ENCODE measurements at regions of chr7 and their contacts with region 1.

Region 1: DNA sequence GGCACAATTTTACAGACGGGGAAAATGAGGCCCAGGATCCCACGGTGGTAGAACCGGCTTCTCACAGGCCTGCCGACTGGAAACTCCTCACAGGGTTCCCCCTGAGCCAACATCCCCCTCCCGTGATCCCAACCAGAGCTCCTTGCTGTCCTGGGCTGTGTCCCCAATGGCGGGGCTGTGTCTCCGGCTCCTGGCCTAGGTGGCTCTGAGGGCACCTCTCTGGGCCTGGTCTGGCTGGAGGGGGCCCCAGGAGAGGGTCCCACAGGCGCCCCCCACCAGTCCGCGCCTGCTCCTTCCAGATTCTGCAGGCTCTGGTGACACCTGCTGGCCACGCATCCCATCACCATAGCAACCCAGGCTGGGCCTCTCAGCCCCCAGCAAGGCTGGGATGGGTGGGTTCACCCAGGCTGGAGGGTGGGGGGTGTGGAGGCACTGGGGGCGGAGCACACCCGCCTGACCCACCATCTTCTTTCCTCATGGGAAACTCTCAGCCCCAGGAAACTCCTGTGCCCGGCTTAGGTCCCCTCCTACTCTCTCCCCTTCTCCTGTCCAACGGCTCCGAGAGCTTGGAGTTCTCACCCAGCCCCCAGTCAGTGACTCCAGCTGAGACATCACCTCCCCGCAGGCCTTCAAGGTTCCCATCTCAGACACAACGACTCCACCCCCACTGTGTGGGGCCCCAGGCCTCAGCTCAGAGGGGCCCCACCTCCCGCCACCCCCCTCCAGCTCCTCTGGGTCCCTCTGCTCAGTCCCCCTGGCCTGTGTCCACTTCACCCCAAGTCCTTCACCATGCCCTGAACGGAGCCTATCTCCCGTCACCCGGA is 27.1 kb upstream of the TNRC18 start:
- DNase-seq: peak; percentile 63
- ATAC-seq: peak; percentile 83
- H3K4me3 Mint-ChIP-seq: no peak overlapping the region
- H3K27ac Mint-ChIP-seq: no peak overlapping the region
- H3K4me1 Mint-ChIP-seq: peaks cover 6% of the 10 kb centered on the region
- H3K27me3 Mint-ChIP-seq: no peaks in the 10 kb centered on the region
- CTCF ChIP-seq: peak; percentile 67

Region 2: GRCh38 chr7:5237286-5237685 is 213.5 kb before region 1 on chr7:
- CTCF ChIA-PET with region 1: interaction called, 18 read pairs
- POLR2A ChIA-PET with region 1: no interaction called
- intact Hi-C with region 1: no loop called
- DNase-seq: no peak
- ATAC-seq: no peak
- H3K4me3 Mint-ChIP-seq: no peak overlapping the region
- H3K27ac Mint-ChIP-seq: no peak overlapping the region
- H3K4me1 Mint-ChIP-seq: peaks cover 37% of the 10 kb centered on the region
- H3K27me3 Mint-ChIP-seq: peaks cover 23% of the 10 kb centered on the region
- CTCF ChIP-seq: no peak

Region 3: GRCh38 chr7:5396999-5397663 is 53.6 kb before region 1 on chr7:
- CTCF ChIA-PET with region 1: interaction called, 13 read pairs
- POLR2A ChIA-PET with region 1: no interaction called
- intact Hi-C with region 1: no loop called
- DNase-seq: peak; percentile 95
- ATAC-seq: peak; percentile 91
- H3K4me3 Mint-ChIP-seq: peak overlapping the region; percentile 82
- H3K27ac Mint-ChIP-seq: peak overlapping the region; percentile 92
- H3K4me1 Mint-ChIP-seq: peaks cover 32% of the 10 kb centered on the region
- H3K27me3 Mint-ChIP-seq: no peaks in the 10 kb centered on the region
- CTCF ChIP-seq: no peak

Measured in activated CD8-positive, alpha-beta T cell treated with anti-CD3 and anti-CD28 coated beads for 36 hours (primary cell).